GM12878 (cell line): ENCODE measurements at regions of chr12 and their contacts with region 1.

Region 1: DNA sequence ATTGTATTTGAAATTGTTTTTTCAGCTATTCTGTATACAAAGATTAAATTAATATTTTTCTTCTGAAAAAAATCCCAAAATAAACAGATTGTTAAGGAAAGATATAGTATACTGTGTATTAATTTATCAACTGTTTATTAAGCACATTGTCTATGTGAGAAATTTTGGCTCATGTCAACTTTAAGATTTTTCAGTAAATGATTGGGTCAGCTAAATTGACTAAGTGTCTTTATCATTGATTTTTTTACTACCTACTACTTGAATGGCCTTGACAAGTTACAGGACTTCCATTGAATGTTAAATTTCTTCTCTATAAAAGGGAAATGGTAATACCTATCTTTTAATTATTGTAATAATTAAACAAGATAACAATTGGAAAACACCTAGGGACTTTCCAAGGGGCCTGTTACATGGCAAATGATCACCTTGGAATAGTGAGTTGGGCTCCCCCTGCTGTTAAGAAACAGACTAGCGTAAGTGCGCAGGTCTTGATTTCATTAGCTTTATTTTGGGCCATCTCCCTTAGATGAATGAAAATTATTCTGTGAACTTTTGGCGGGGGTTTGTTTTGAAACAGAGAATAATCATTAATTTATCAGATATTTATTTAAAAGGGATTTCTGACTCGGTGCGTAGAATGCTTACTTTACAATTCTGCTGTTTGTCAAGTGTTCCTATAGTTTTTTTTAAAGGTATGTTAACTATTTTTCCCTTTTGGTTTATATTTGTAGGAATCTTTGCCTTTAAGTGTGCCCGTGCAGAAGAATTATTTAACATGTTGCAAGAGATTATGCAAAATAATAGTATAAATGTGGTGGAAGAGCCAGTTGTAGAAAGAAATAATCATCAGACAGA is 14.5 kb upstream of the CCT2 start:
- DNase-seq: peak; percentile 15
- ATAC-seq: peak; percentile 97
- H3K4me3 ChIP-seq: no peak overlapping the region
- H3K27ac ChIP-seq: no peak overlapping the region; the same call in 1 of the 2 replicates
- H3K4me1 ChIP-seq: no peaks in the 10 kb centered on the region
- H3K27me3 ChIP-seq: no peaks in the 10 kb centered on the region
- CTCF ChIP-seq: peak; percentile 66 to 77 (median 72)
- EP300 ChIP-seq: no peak
- POLR2A ChIP-seq: no peak
- RAD21 ChIP-seq: peak; percentile 88

Region 2: GRCh38 chr12:69354556-69355187 is 216.1 kb before region 1 on chr12:
- CTCF ChIA-PET with region 1: interaction called, 119 read pairs
- POLR2A ChIA-PET with region 1: interaction called, 6 read pairs
- RAD21 ChIA-PET with region 1: interaction called, 65 read pairs
- SMC1A ChIA-PET with region 1: interaction called, 94 read pairs
- in situ Hi-C with region 1: loop called (anchors 5 kb)
- intact Hi-C with region 1: loop called (anchors 1 kb)
- DNase-seq: no peak
- ATAC-seq: no peak
- H3K4me3 ChIP-seq: no peak overlapping the region
- H3K27ac ChIP-seq: no peak overlapping the region
- H3K4me1 ChIP-seq: no peaks in the 10 kb centered on the region; the same call in 1 of the 2 replicates
- H3K27me3 ChIP-seq: no peaks in the 10 kb centered on the region
- CTCF ChIP-seq: no peak
- EP300 ChIP-seq: no peak
- POLR2A ChIP-seq: no peak
- RAD21 ChIP-seq: no peak

Region 3: GRCh38 chr12:69415471-69416275 is 155.1 kb before region 1 on chr12:
- CTCF ChIA-PET with region 1: interaction called, 16 read pairs
- POLR2A ChIA-PET with region 1: interaction called, 4 read pairs
- RAD21 ChIA-PET with region 1: interaction called, 11 read pairs
- SMC1A ChIA-PET with region 1: interaction called, 13 read pairs
- in situ Hi-C with region 1: no loop called
- intact Hi-C with region 1: loop called (anchors 1 kb)
- DNase-seq: no peak
- ATAC-seq: peak; percentile 73
- H3K4me3 ChIP-seq: no peak overlapping the region
- H3K27ac ChIP-seq: no peak overlapping the region
- H3K4me1 ChIP-seq: no peaks in the 10 kb centered on the region
- H3K27me3 ChIP-seq: no peaks in the 10 kb centered on the region
- CTCF ChIP-seq: peak; percentile 48 to 61 (median 50)
- EP300 ChIP-seq: no peak
- POLR2A ChIP-seq: no peak
- RAD21 ChIP-seq: peak; percentile 60

Region 4: GRCh38 chr12:69497308-69498026 is 73.3 kb before region 1 on chr12:
- CTCF ChIA-PET with region 1: interaction called, 3 read pairs
- POLR2A ChIA-PET with region 1: interaction called, 3 read pairs
- RAD21 ChIA-PET with region 1: interaction called, 4 read pairs
- SMC1A ChIA-PET with region 1: interaction called, 13 read pairs
- in situ Hi-C with region 1: no loop called
- intact Hi-C with region 1: no loop called
- DNase-seq: peak; percentile 35
- ATAC-seq: peak; percentile 98
- H3K4me3 ChIP-seq: peak overlapping the region; percentile 55; the same call in 1 of the 2 replicates
- H3K27ac ChIP-seq: peak overlapping the region; percentile 72
- H3K4me1 ChIP-seq: no peaks in the 10 kb centered on the region
- H3K27me3 ChIP-seq: no peaks in the 10 kb centered on the region
- CTCF ChIP-seq: no peak
- EP300 ChIP-seq: no peak
- POLR2A ChIP-seq: no peak
- RAD21 ChIP-seq: no peak

Region 5: DNA sequence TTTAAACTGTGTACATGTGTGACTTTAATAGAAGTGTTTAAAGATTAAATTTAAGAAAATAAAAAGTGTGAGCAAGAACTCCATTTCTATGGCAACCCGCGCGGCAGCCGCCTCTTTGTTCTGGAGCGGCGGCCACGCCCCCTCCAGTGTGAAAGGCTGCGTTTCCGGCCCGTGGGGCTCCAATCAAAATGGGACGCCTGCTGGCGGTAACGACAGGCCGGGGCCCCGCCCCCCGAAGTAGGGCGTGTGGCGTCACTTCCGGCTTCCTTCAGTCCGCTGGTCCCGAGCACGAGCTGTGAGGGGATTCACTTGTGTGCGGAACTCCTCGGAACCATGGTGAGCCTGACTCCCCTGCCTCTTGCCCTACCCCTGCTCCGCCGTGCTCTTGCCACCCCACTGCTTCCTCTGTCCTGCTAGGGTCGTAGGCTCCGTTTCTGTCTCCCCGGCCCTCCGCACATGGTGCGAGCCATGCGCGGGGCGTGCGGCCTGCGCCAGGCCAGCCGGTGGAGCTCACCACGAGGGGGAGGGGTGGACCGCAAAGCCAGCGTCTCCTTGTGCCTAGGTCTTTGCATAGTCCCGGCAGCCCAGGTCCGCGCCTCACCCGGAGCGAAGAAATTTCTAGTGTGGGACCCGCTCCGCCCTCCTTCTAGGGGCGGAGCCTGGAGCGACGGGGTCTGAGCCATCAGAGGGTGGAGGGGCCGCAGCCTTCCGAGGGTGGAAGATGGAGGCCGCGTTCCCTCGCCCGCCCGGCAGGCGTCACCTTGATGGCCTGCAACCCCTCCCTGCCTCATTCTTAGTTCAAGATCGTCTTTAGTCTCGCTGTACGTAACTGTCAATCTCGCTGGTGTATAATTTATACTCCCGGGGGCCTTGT is 14.7 kb after region 1 on chr12 and contains the start of gene CCT2:
- CTCF ChIA-PET with region 1: interaction called, 20 read pairs
- POLR2A ChIA-PET with region 1: interaction called, 4 read pairs
- RAD21 ChIA-PET with region 1: interaction called, 4 read pairs
- SMC1A ChIA-PET with region 1: interaction called, 30 read pairs
- in situ Hi-C with region 1: no loop called
- intact Hi-C with region 1: no loop called
- DNase-seq: peak; percentile 74
- ATAC-seq: peak; percentile 95
- H3K4me3 ChIP-seq: peak within 1 kb of the TSS; percentile 99
- H3K27ac ChIP-seq: peak within 1 kb of the TSS; percentile 98
- H3K4me1 ChIP-seq: peaks cover 4% of the 10 kb centered on the region; the same call in 1 of the 2 replicates
- H3K27me3 ChIP-seq: no peaks in the 10 kb centered on the region
- CTCF ChIP-seq: peak in 2 of 3 experiments; percentile 15 to 38; a peak in 1 of 6 replicates
- EP300 ChIP-seq: no peak
- POLR2A ChIP-seq: peak; percentile 99
- RAD21 ChIP-seq: no peak
- polyA plus RNA-seq, gene CCT2: 355 to 374 TPM

Region 6: GRCh38 chr12:70242695-70243509 is 672.1 kb after region 1 on chr12 and contains the start of gene CNOT2:
- CTCF ChIA-PET with region 1: no interaction called
- POLR2A ChIA-PET with region 1: no interaction called
- RAD21 ChIA-PET with region 1: no interaction called
- SMC1A ChIA-PET with region 1: no interaction called
- in situ Hi-C with region 1: no loop called
- intact Hi-C with region 1: no loop called
- DNase-seq: peak; percentile 44
- ATAC-seq: peak; percentile 85
- H3K4me3 ChIP-seq: peak within 1 kb of the TSS; percentile 94
- H3K27ac ChIP-seq: peak within 1 kb of the TSS; percentile 96
- H3K4me1 ChIP-seq: no peaks in the 10 kb centered on the region; the same call in 1 of the 2 replicates
- H3K27me3 ChIP-seq: no peaks in the 10 kb centered on the region
- CTCF ChIP-seq: no peak
- EP300 ChIP-seq: peak in 1 of 2 experiments; percentile 58; a peak in 2 of 4 replicates
- POLR2A ChIP-seq: peak; percentile 88
- RAD21 ChIP-seq: no peak
- polyA plus RNA-seq, gene CNOT2: 37.9 to 55.4 TPM